Heart right ventricle (tissue), 16 donors: ENCODE measurements at regions of chr12 and their contacts with region 1.

Region 1: DNA sequence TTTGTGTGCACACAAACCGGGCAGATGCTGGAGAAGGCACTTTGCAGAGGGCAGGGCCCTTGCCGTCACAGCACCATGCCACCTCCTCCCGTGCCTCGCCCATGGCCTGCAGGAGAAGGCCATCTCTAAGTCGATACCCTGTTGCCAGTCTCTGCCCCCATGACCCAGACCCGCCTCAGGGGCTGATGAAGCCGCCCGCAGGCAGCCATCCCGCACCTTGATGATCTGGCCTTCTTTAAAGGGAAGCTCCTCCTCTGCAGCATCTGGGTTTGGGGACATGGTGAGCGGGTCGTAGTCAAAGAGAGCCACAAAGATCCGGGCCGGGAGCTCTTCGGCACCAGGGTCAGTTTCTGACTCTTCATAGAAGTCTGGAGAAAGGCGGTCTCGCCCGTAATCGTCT is 76.2 kb downstream of the PIWIL1 start:
- DNase-seq: no peak
- ATAC-seq: no peak
- H3K4me3 ChIP-seq: no peak overlapping the region
- H3K27ac ChIP-seq: no peak overlapping the region
- H3K4me1 ChIP-seq: no peaks in the 10 kb centered on the region
- H3K27me3 ChIP-seq: peaks cover 0 to 48% (median 16%) of the 10 kb centered on the region in 7 donors
- CTCF ChIP-seq: no peak

Region 2: DNA sequence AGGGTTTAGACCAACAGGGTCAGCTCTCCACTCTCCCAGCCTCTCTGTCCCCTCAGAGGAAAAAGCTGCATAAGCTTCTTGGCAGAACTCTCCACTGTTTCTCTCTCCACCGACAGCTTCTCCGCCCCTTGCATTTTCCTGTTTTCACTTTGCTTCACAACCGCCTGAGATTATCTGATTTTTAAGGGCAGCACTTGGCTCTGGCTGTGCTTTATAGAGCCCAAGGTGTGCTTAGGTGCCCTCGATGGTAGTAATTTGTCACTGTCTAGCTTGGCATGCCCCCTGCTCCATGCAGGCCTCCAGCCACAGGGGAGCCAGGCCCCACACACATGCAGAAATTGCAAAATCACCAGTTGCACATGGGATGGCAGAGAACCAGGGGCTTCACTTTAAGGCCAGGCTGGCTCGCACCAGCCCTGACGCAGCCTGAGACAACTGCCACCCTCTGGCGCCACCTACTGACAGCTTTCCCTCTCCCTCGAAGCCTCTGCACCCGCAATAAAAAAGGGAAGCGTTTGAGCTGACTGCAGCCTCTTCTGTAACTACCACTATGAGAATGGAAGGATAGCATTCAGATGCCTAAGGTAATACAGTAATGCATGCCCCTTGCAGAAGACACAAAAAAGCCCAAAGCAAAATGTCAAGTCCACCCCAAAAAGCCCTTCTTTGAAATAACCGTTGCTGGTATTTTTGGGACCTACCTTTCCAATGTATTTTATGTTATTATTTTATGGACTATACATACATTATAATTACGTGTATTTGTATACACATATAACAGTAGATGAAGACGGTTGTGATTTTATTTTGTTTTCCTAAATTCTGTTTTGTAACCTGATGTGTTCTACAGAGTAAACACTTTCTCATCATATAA is 334.2 kb after region 1 on chr12:
- intact Hi-C with region 1: loop called in 1 of 10 experiments (anchors 5 kb)
- DNase-seq: peak; percentile 75 to 79
- ATAC-seq: peak; percentile 79 to 95 (median 85)
- H3K4me3 ChIP-seq: no peak overlapping the region
- H3K27ac ChIP-seq: no peak overlapping the region
- H3K4me1 ChIP-seq: peaks cover 0 to 4% (median 0%) of the 10 kb centered on the region in 9 donors
- H3K27me3 ChIP-seq: peaks cover 0 to 61% (median 30%) of the 10 kb centered on the region in 7 donors
- CTCF ChIP-seq: peak; percentile 67 to 88 (median 85)